Panc1 (cell line): ENCODE measurements at regions of chr21 and their contacts with region 1.

Region 1: GRCh38 chr21:44529503-44530125 is 10.4 kb downstream of the KRTAP10-1 start:
- DNase-seq: no peak
- ATAC-seq: no peak
- H3K4me3 ChIP-seq: no peak overlapping the region
- H3K27ac ChIP-seq: no peak overlapping the region
- H3K4me1 ChIP-seq: no peaks in the 10 kb centered on the region
- H3K27me3 ChIP-seq: no peaks in the 10 kb centered on the region
- CTCF ChIP-seq: no peak

Region 2: DNA sequence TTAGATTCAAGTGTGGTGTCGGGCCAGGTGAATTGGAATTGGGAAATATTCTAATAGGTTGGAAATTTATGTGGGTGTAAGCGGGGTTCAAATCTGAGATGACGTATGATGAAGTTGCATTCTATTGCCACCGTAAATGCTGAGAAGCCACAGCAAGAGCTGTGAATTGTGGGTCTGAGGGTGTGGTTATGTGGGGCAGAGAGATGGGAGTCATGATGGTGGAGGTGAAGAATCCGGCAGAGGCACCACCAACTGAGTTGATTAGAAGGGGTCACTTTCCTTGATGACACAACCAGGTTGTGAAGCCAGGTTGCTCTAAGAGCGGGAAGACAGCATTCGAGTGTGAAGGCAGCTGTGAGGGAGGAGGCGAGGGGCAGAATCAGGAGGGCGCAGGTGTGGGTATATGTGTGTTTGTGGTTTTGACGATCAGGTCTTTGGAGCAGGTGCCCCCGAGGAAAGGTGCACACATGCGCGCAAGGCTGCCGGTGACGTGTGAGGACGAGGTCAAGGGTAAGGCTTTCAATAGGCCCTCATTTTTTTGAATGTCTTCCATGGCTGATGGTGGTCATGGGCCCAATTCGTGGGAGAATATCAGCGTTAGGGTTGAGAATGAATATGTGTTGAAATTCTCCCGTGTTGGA is 55.6 kb before region 1 on chr21:
- CTCF ChIA-PET with region 1: no interaction called
- POLR2A ChIA-PET with region 1: no interaction called
- in situ Hi-C with region 1: no loop called
- intact Hi-C with region 1: no loop called
- DNase-seq: no peak
- ATAC-seq: no peak
- H3K4me3 ChIP-seq: no peak overlapping the region
- H3K27ac ChIP-seq: no peak overlapping the region
- H3K4me1 ChIP-seq: no peaks in the 10 kb centered on the region
- H3K27me3 ChIP-seq: no peaks in the 10 kb centered on the region
- CTCF ChIP-seq: no peak

Region 3: GRCh38 chr21:44601596-44602462 is 72.2 kb after region 1 on chr21:
- CTCF ChIA-PET with region 1: no interaction called
- POLR2A ChIA-PET with region 1: no interaction called
- in situ Hi-C with region 1: no loop called
- intact Hi-C with region 1: no loop called
- DNase-seq: no peak
- ATAC-seq: no peak; the same call in 1 of the 2 replicates
- H3K4me3 ChIP-seq: no peak overlapping the region
- H3K27ac ChIP-seq: no peak overlapping the region
- H3K4me1 ChIP-seq: no peaks in the 10 kb centered on the region; the same call in none of the 2 replicates
- H3K27me3 ChIP-seq: no peaks in the 10 kb centered on the region
- CTCF ChIP-seq: no peak

Region 4: GRCh38 chr21:44626673-44627143 is 97.1 kb after region 1 on chr21 and contains the start of gene KRTAP10-9:
- CTCF ChIA-PET with region 1: interaction called, 10 read pairs
- POLR2A ChIA-PET with region 1: no interaction called
- in situ Hi-C with region 1: no loop called
- intact Hi-C with region 1: no loop called
- DNase-seq: no peak
- ATAC-seq: no peak
- H3K4me3 ChIP-seq: no peak within 1 kb of the TSS
- H3K27ac ChIP-seq: no peak within 1 kb of the TSS
- H3K4me1 ChIP-seq: no peaks in the 10 kb centered on the region
- H3K27me3 ChIP-seq: no peaks in the 10 kb centered on the region
- CTCF ChIP-seq: no peak
- total RNA-seq, gene KRTAP10-9: not detected